Activated naive CD4-positive, alpha-beta T cell treated with anti-CD3 and anti-CD28 coated beads for 36 hours (primary cell): ENCODE measurements at regions of chr1 and their contacts with region 1.

Region 1: GRCh38 chr1:89657886-89658285 is 25.0 kb downstream of the LRRC8C start:
- DNase-seq: peak; percentile 41
- H3K4me3 Mint-ChIP-seq: no peak overlapping the region
- H3K27ac Mint-ChIP-seq: peak overlapping the region; percentile 44
- H3K4me1 Mint-ChIP-seq: peaks cover 83% of the 10 kb centered on the region
- H3K27me3 Mint-ChIP-seq: no peaks in the 10 kb centered on the region

Region 2: DNA sequence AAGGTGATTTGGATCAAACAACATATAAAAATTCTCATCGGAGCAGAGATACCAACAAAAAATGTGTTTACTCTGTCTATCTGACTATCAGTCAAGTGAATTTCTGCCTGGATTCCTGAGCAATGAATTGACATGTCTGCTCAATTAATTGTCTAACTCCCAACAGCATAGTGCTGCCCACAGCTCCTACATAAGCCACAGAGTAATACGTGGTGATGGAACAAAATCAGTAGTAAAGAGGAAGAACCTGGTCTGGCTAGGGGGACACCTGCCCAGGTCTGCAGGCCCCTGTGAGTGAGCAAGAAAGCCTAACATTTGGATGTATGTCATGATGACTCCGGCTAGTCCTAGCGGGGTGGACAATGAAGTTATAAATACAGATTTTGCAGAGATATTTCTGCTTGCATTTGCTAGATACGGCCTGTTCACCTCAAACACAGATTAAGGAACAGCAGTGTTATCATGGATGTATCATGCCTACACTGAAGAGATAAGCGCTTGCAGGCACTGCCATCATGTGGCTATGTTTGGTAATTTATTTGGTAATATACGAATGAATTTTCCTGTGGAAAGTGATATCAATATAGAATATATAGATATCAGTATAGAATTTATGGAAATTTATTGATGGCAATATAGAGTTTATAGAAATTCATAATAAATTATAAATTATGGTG is 202.9 kb before region 1 on chr1:
- CTCF ChIA-PET with region 1: no interaction called
- intact Hi-C with region 1: no loop called
- DNase-seq: peak; percentile 85
- H3K4me3 Mint-ChIP-seq: no peak overlapping the region
- H3K27ac Mint-ChIP-seq: no peak overlapping the region
- H3K4me1 Mint-ChIP-seq: peaks cover 18% of the 10 kb centered on the region
- H3K27me3 Mint-ChIP-seq: peaks cover 4% of the 10 kb centered on the region

Region 3: GRCh38 chr1:89605692-89606091 is 52.2 kb before region 1 on chr1:
- CTCF ChIA-PET with region 1: interaction called, 3 read pairs
- intact Hi-C with region 1: loop called (anchors 1 kb)
- DNase-seq: no peak
- H3K4me3 Mint-ChIP-seq: no peak overlapping the region
- H3K27ac Mint-ChIP-seq: no peak overlapping the region
- H3K4me1 Mint-ChIP-seq: peaks cover 95% of the 10 kb centered on the region
- H3K27me3 Mint-ChIP-seq: no peaks in the 10 kb centered on the region

Region 4: DNA sequence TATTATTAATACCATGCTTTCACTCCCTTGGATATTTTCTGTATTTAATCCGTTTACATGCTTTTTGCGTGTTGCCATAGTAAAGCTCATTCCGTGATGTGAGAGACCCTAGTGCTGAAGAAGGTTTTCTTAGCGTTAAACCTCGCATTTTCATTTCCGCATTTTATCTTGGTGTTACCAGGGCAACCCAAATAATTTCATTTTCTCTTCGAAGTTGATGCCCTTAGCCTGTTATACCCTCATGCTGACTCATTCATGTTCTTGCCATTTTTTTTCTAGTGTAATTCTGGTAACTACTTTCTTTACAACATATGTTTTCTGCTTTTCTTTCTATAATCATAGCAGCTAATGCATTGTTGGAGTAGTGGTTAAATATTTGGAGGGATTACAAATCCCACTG is 12.3 kb after region 1 on chr1:
- CTCF ChIA-PET with region 1: interaction called, 8 read pairs
- intact Hi-C with region 1: loop called (anchors 1 kb)
- DNase-seq: no peak
- H3K4me3 Mint-ChIP-seq: peak overlapping the region; percentile 16
- H3K27ac Mint-ChIP-seq: peak overlapping the region; percentile 43
- H3K4me1 Mint-ChIP-seq: peaks cover 83% of the 10 kb centered on the region
- H3K27me3 Mint-ChIP-seq: no peaks in the 10 kb centered on the region

Region 5: GRCh38 chr1:89675677-89676076 is 17.8 kb after region 1 on chr1:
- CTCF ChIA-PET with region 1: interaction called, 8 read pairs
- intact Hi-C with region 1: loop called (anchors 2 kb)
- DNase-seq: no peak
- H3K4me3 Mint-ChIP-seq: no peak overlapping the region
- H3K27ac Mint-ChIP-seq: peak overlapping the region; percentile 52
- H3K4me1 Mint-ChIP-seq: peaks cover 80% of the 10 kb centered on the region
- H3K27me3 Mint-ChIP-seq: no peaks in the 10 kb centered on the region

Region 6: DNA sequence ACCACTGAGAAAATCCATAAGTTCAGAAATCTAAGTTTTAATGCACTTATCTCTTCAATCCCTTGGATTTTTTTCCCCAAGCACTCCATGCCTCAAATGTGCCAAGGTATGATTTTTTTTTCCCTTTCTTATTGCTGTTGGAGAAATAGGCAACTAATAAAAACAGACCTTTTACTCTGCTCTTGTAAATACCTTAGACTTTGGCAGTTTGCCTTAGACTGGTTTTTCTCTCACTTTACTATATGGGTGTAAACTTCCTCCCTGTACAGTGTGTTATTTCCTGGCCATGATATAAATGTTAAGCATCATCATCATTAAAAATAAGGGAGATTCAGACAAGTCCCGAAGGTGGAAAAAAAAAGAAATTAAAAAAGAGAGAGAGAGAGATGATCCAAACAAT is 40.7 kb after region 1 on chr1:
- CTCF ChIA-PET with region 1: no interaction called
- intact Hi-C with region 1: loop called (anchors 1 kb)
- DNase-seq: no peak
- H3K4me3 Mint-ChIP-seq: no peak overlapping the region
- H3K27ac Mint-ChIP-seq: peak overlapping the region; percentile 88
- H3K4me1 Mint-ChIP-seq: peaks cover 83% of the 10 kb centered on the region
- H3K27me3 Mint-ChIP-seq: no peaks in the 10 kb centered on the region